ENCODE measurements at regions of chr3 and their contacts with region 1.

Region 1: GRCh38 chr3:20039766-20040475 is at the start of gene KAT2B:
- DNase-seq: peak; percentile 84 to 89 (median 87)
- H3K4me3 ChIP-seq: peak within 1 kb of the TSS; percentile 70
- H3K27ac ChIP-seq: peak within 1 kb of the TSS; percentile 97 to 99
- H3K4me1 ChIP-seq: peaks cover 6% of the 10 kb centered on the region
- H3K27me3 ChIP-seq: no peaks in the 10 kb centered on the region
- CTCF ChIP-seq: peak; percentile 60 to 69 (median 67)
- EP300 ChIP-seq: no peak
- POLR2A ChIP-seq: peak; percentile 24
- total RNA-seq, gene KAT2B: 31.4 to 49.3 (median 36.9) TPM

Region 2: DNA sequence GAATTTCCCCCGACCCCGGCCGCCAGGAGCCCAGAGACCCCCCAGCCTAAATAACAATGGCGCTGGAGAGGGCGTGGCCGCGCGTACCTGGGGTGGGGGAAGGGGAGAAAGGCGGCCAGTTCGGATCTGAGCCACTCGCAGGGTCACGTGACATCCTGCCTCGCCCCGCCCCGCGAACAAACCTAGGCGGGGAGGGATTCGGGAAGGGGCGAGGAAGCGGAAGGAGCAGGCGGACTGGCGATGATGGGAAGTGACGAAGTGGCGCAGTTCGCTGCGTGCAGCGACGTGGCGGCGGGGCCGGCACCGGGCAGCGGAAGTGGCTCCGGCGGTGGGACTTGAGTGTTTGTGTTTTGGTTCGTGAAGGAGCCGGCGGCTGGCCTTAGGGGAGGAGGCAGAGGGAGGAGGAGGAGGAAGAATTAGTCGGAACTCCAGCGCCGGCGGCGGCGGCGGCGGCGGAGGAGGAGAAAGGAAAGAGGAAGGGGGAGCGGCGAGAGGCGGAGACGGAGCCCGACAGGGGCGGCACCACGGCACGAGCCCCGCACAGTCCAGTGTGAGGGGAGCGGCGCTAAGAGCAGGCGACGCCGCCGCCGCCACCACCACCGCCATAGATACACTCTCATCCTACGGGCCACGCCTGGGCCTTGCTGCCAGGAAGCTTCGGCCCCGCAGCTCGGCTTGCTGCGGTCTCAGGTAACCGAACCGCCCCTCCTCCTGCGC is 92.9 kb before region 1 on chr3 and contains the start of gene RAB5A:
- intact Hi-C with region 1: loop called in 3 of 4 experiments (anchors 1 to 10 kb)
- DNase-seq: peak; percentile 97 to 98 (median 97)
- H3K4me3 ChIP-seq: peak within 1 kb of the TSS; percentile 94
- H3K27ac ChIP-seq: peak within 1 kb of the TSS; percentile 92 to 96
- H3K4me1 ChIP-seq: peaks cover 4% of the 10 kb centered on the region
- H3K27me3 ChIP-seq: no peaks in the 10 kb centered on the region
- CTCF ChIP-seq: peak in 2 of 3 donors; percentile 2 to 18
- EP300 ChIP-seq: peak; percentile 93
- POLR2A ChIP-seq: peak; percentile 93
- total RNA-seq, gene RAB5A: 39.8 to 61.2 (median 46.9) TPM

Region 3: DNA sequence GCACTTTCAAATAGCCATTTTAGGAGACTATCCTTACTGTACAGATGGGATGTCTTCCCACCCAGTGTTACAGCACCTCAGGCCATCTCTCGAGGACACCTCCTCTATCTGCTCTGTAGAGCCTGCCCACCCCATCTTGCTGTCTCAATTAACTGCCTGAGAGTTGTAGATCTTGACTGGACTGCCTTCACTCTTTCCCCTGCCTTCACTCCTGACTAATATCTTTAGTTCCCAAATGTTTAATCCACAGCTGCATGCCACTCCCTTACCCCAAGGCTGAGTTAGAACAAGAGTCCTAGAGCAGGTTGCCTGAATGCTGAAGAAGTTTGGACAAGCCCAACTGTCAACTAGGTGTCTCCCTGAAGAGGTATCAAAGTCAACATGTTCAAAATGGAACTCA is 26.5 kb before region 1 on chr3:
- intact Hi-C with region 1: no loop called
- DNase-seq: no peak
- H3K4me3 ChIP-seq: no peak overlapping the region
- H3K27ac ChIP-seq: no peak overlapping the region
- H3K4me1 ChIP-seq: no peaks in the 10 kb centered on the region
- H3K27me3 ChIP-seq: peaks cover 2% of the 10 kb centered on the region
- CTCF ChIP-seq: no peak
- EP300 ChIP-seq: no peak
- POLR2A ChIP-seq: no peak

Region 4: GRCh38 chr3:20060974-20061685 is 21.2 kb after region 1 on chr3:
- intact Hi-C with region 1: no loop called
- DNase-seq: peak in 1 of 5 donors; percentile 34
- H3K4me3 ChIP-seq: no peak overlapping the region
- H3K27ac ChIP-seq: peak overlapping the region in 1 of 2 donors; percentile 28
- H3K4me1 ChIP-seq: peaks cover 16% of the 10 kb centered on the region
- H3K27me3 ChIP-seq: no peaks in the 10 kb centered on the region
- CTCF ChIP-seq: no peak
- EP300 ChIP-seq: no peak
- POLR2A ChIP-seq: no peak

Region 5: DNA sequence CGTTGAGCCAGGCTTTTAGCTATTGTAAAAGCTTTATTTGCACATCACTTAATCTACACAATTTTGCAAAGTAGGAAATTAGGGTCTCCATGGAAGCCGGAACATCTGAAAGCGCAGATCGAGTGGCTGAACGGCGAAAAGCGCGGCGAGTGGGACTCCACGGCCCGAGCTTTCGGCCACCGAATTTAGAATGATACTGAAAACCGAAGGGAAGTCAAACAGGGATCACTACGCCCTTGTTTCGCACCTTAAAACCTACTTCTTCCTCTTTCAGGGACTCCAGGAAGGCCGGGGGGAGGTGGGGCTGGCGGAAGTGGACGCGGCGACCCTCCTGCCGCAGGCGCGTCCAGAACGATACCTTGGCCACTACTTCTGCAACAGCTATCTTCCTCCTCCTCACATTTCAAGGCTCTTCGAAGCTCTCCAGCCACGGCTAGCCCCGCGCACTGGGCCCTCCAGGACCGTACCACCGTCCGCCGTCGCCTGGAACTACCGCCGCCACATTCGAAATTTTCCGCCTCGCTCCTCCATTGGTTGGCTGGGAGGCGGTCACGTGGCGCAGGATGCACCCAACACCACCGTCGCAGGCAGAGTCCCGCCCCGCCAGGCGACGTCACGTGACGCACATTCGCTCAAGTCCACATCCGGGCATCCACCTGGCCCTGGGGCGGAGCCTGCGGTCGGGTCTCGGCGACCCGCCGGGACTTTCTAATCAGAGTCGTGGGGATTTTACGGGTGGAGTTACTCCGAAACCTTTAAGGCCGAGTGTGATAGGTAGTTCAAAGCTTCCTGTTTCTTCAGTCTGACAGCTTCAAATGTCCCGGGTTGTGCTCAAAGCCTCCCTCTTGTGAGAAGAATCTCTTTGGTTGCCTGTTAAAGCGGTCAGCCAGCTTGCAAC is 146.0 kb after region 1 on chr3 and contains the start of gene SGO1:
- intact Hi-C with region 1: loop called in 2 of 4 experiments (anchors 2 to 10 kb)
- DNase-seq: peak; percentile 99 to 100 (median 99)
- H3K4me3 ChIP-seq: peak within 1 kb of the TSS; percentile 76
- H3K27ac ChIP-seq: peak within 1 kb of the TSS; percentile 84 to 86
- H3K4me1 ChIP-seq: peaks cover 5% of the 10 kb centered on the region
- H3K27me3 ChIP-seq: no peaks in the 10 kb centered on the region
- CTCF ChIP-seq: no peak
- EP300 ChIP-seq: peak; percentile 13
- POLR2A ChIP-seq: peak; percentile 87
- total RNA-seq, gene SGO1: 0.10 to 1.2 (median 0.33) TPM

Measured in ovary (tissue), 10 donors.